ENCODE measurements at regions of chr2 and their contacts with region 1.

Region 1: DNA sequence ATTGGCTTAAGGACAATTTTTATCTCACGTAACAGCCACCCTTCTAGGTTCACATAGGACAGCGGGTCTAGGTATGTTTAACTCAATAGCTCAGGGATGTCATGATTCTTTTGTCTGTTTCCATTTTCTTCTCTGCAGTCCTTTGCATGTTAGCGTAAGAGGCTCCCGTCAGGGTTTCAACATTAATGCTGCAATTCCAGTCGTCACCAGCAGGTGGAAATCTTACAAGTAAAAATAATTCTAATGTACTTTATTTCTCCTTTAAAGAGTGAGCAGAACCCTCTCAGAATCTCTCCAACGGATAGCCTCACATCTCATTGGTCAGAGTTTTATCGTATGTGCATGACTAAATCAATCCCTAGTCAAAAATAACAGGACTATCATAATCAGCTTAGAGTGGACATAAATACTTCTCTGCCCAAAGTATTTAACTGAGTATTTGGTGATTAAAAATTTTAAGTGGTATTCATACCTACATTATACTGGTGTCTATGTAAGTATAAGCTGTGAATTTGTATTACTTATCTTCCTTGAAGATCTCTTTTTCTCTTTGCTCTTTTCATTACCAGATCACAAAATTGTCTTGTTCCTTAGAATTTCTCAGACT is 487.2 kb upstream of the GCFC2 start:
- DNase-seq: peak; percentile 81
- ATAC-seq: peak; percentile 86
- H3K4me3 Mint-ChIP-seq: no peak overlapping the region
- H3K27ac Mint-ChIP-seq: no peak overlapping the region
- H3K4me1 Mint-ChIP-seq: peaks cover 22% of the 10 kb centered on the region
- H3K27me3 Mint-ChIP-seq: no peaks in the 10 kb centered on the region
- CTCF ChIP-seq: peak; percentile 69

Region 2: DNA sequence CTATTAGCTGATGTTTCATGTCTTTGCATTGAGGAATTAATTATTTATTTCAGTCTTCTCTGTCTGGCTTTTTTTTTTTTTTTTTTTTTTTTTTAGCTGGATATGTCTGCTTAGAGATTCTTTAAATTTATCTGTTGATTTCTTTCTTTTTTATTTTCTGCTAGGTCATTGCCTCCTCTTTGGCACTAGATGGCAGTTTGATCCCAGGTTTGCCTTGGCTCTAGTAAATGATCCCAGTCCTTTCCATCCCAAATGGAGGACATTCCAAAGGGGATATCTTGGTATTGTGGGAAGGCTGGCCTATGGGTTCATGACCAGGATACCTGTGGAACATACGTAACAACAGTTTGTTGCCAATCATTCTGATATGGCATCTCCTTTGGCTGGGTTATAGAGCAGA is 147.7 kb before region 1 on chr2:
- CTCF ChIA-PET with region 1: no interaction called
- POLR2A ChIA-PET with region 1: no interaction called
- DNase-seq: no peak
- ATAC-seq: peak; percentile 72
- H3K4me3 Mint-ChIP-seq: no peak overlapping the region
- H3K27ac Mint-ChIP-seq: no peak overlapping the region
- H3K4me1 Mint-ChIP-seq: no peaks in the 10 kb centered on the region
- H3K27me3 Mint-ChIP-seq: no peaks in the 10 kb centered on the region
- CTCF ChIP-seq: no peak

Region 3: DNA sequence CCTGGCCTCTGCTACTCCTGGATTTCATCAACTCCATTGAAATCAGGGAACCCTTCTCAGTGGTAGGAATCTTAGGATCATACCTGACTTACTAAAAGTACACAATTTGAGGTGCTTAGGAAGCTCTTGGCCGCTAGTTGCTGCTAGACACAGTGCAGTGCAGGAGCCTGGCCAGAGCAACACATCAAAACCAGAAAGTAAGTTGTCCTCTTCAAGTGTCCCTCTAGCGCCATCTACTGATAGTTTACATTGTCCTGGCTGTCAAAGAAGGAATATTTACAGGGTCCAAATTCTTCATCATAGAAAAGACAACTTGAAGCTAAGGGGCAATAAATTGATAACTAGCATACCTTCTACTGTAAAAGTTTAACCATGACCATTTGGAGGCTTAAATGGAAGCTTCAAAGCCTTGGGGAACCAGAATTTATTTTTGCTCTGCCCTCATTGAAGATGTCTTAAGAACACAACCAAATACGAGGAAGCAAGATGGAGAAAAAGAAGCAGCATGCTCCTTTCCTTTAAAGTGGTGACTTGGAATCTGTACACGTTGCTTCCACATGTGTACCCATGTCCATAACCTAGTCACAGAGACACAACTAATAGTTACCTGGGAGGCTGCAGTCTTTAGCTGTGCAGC is 401.9 kb after region 1 on chr2:
- CTCF ChIA-PET with region 1: interaction called, 21 read pairs
- POLR2A ChIA-PET with region 1: no interaction called
- DNase-seq: peak; percentile 68
- ATAC-seq: peak; percentile 100
- H3K4me3 Mint-ChIP-seq: no peak overlapping the region
- H3K27ac Mint-ChIP-seq: peak overlapping the region; percentile 45; the same call in 1 of the 2 replicates
- H3K4me1 Mint-ChIP-seq: peaks cover 16% of the 10 kb centered on the region
- H3K27me3 Mint-ChIP-seq: no peaks in the 10 kb centered on the region
- CTCF ChIP-seq: peak; percentile 84

Measured in WTC11 (cell line).